Activated CD8-positive, alpha-beta T cell treated with anti-CD3 and anti-CD28 coated beads, Interleukin-2, amount 10 ng/mL, durations not matched to agents 7 days and 5 days (primary cell): ENCODE measurements at regions of chr3 and their contacts with region 1.

Region 1: DNA sequence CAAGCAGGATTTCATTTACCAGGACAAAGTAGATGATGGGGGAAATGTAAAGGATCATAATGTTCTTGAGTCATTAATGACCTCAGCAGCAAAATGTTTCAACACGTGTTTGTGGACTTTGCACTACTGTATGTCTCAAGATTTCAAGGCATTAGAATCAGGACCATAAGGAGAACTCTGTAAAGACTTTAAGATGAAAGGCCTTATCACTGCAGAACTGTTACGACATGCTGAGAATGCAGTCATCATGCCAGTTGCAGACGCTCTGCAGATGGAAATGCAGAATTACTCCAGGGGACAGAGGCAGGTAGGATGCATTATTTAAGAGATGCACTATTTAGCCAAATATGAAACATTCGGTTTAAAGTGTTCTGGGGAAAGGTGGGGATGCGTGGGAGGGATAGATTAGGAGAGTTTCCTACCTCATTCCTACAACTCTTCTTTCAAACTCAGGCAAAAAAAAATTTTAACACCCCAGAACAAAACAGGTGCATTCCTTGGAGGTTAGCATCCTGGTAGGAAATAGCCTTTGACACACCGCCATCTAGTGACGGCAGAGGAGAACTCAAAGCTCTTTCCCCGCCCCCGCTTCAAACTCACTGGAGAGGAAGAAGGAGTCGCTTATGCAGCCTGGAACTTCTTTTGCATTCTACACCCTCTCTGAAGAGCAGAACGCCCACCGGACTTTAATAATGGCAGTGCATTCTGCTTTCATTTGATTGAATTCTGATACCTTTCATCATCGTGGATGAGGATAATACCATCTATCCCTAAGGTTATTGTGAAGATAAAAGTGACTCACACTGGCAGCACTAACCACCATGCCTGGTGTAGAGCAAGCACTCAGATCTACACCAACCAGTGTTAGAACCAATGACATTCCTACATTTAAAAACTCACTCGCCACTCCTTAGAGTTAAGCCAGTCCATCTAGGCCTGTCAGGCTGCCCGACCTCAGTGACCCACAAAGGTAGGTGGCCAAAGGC is 43.1 kb upstream of the TOPAZ1 start:
- DNase-seq: peak; percentile 82
- ATAC-seq: peak; percentile 71
- H3K4me3 Mint-ChIP-seq: no peak overlapping the region
- H3K27ac Mint-ChIP-seq: no peak overlapping the region
- H3K4me1 Mint-ChIP-seq: peaks cover 2% of the 10 kb centered on the region
- H3K27me3 Mint-ChIP-seq: peaks cover 19% of the 10 kb centered on the region

Region 2: GRCh38 chr3:43769471-43770425 is 428.8 kb before region 1 on chr3:
- CTCF ChIA-PET with region 1: interaction called, 12 read pairs
- POLR2A ChIA-PET with region 1: no interaction called
- DNase-seq: peak; percentile 77
- ATAC-seq: peak; percentile 75
- H3K4me3 Mint-ChIP-seq: no peak overlapping the region
- H3K27ac Mint-ChIP-seq: no peak overlapping the region
- H3K4me1 Mint-ChIP-seq: peaks cover 24% of the 10 kb centered on the region
- H3K27me3 Mint-ChIP-seq: peaks cover 11% of the 10 kb centered on the region

Region 3: DNA sequence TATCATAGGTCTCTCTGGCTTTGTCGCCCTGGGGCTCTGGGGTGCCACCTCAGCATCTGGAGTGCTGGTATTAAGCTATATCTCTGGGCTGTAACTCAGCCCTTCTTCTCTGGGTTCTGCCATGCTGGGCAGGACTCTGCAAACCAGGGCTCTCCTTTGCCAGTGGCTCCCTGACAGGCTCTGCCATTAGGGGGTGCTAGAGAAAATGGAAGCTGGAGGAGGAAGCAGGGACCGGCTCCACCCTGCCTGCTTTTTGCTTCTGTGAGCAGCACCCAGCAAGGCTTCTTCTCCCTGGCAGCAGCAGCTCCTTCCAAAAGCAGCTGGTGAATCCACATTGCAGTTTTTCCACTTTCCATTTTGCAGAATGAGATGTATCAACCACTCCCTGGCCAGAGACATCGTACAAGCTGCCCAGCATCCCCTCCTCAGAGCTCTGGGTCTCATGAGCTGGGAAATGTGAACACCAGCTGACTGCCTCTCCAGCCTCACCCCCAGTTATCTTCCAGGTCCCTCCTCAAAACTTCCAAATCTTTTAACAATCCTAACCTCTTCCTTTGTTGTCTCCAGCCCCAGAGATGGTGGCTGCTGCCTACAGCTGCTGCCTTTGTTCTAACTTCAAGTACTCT is 342.8 kb before region 1 on chr3:
- CTCF ChIA-PET with region 1: interaction called, 14 read pairs
- POLR2A ChIA-PET with region 1: no interaction called
- DNase-seq: peak; percentile 69
- ATAC-seq: peak; percentile 68
- H3K4me3 Mint-ChIP-seq: no peak overlapping the region
- H3K27ac Mint-ChIP-seq: no peak overlapping the region
- H3K4me1 Mint-ChIP-seq: no peaks in the 10 kb centered on the region
- H3K27me3 Mint-ChIP-seq: peaks cover 51% of the 10 kb centered on the region

Region 4: DNA sequence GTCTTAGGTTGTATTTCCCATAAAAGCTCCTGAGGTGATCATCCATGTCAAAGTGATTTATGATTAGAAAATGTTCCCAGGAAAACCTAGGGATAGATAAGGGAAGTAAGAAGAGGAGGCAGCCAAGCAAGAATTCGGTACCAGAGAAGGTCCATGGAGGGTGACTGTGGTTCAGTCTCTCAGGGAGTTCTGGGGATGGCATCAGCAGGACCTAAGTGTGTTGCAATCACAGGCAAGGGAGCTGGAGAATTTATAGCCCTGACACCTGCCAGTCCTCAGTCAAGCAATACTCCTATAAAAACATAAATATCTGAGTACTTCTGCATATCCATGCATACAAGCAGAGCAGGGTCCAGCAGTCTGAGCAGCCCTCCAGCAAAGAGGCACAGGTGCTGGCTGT is 52.5 kb before region 1 on chr3:
- CTCF ChIA-PET with region 1: no interaction called
- POLR2A ChIA-PET with region 1: no interaction called
- DNase-seq: no peak
- ATAC-seq: no peak
- H3K4me3 Mint-ChIP-seq: no peak overlapping the region
- H3K27ac Mint-ChIP-seq: no peak overlapping the region
- H3K4me1 Mint-ChIP-seq: no peaks in the 10 kb centered on the region
- H3K27me3 Mint-ChIP-seq: peaks cover 36% of the 10 kb centered on the region

Region 5: DNA sequence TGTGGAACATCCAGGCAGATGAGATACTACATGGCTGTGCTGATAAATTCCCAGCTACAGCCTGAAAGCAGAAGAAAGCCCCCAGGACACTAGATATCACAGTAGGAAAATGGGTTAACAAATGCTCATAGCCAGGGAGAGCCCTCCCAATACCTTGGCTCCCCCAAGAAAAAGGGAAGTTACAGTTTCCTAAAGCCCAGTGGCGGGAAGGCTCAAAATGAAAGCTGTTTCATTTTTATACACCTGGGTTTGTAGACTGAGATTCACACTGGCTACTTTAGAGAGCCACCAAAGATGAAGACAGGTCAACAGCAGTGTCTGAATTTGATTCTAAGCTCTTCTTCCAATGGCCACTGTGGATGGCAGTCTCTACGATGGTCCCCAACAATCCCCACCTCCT is 11.9 kb before region 1 on chr3:
- CTCF ChIA-PET with region 1: interaction called, 11 read pairs
- POLR2A ChIA-PET with region 1: no interaction called
- DNase-seq: no peak
- ATAC-seq: no peak
- H3K4me3 Mint-ChIP-seq: no peak overlapping the region
- H3K27ac Mint-ChIP-seq: no peak overlapping the region
- H3K4me1 Mint-ChIP-seq: no peaks in the 10 kb centered on the region
- H3K27me3 Mint-ChIP-seq: peaks cover 21% of the 10 kb centered on the region

Region 6: GRCh38 chr3:44284949-44285348 is 86.4 kb after region 1 on chr3:
- CTCF ChIA-PET with region 1: no interaction called
- POLR2A ChIA-PET with region 1: no interaction called
- DNase-seq: no peak
- ATAC-seq: no peak
- H3K4me3 Mint-ChIP-seq: no peak overlapping the region
- H3K27ac Mint-ChIP-seq: no peak overlapping the region
- H3K4me1 Mint-ChIP-seq: no peaks in the 10 kb centered on the region
- H3K27me3 Mint-ChIP-seq: peaks cover 20% of the 10 kb centered on the region

Region 7: GRCh38 chr3:44568561-44568960 is 370.0 kb after region 1 on chr3:
- CTCF ChIA-PET with region 1: no interaction called
- POLR2A ChIA-PET with region 1: no interaction called
- DNase-seq: no peak
- ATAC-seq: no peak
- H3K4me3 Mint-ChIP-seq: no peak overlapping the region
- H3K27ac Mint-ChIP-seq: no peak overlapping the region
- H3K4me1 Mint-ChIP-seq: no peaks in the 10 kb centered on the region
- H3K27me3 Mint-ChIP-seq: no peaks in the 10 kb centered on the region